ENCODE measurements at regions of chr3 and their contacts with region 1.

Region 1: DNA sequence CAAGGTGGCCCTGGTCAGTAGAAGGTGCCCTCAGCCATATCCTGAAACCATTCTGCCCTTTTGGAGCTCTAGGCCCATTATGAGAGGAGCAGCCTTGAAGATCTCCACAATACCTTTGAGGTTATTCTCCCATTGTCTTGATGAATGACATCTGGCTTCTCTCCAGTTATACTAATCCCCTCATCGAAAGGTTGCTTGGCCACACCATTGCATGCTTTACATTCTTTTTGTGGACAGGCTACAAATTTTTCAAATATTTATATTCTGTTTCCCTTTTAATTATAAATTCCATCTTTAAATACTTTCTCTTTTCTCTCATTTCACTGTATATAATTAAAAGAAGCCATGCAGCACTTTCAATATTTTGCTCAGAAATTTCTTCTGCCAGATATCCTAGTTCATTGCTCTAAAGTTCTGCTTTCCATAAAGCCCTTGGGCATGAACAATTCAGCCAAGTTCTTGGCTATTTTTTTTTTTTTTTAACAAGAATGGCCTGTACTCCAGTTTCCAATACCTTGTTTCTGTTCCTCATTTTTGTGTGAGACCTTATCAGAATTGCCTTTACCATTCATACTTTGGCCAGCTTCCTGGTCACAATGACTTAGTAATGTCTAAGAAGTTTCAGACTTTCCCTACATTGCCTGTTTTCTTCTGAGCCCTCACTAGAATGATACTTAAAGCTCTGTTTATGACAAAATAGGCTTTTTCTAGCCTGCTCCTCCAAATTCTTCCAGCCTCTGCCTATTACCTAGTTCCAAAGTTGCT is 138.9 kb upstream of the SGO1 start:
- DNase-seq: peak; percentile 36 to 78
- H3K4me3 ChIP-seq: no peak overlapping the region
- H3K27ac ChIP-seq: peak overlapping the region; percentile 78
- H3K4me1 ChIP-seq: no peaks in the 10 kb centered on the region; the same call in 1 of the 2 replicates
- H3K27me3 ChIP-seq: no peaks in the 10 kb centered on the region
- CTCF ChIP-seq: no peak

Region 2: DNA sequence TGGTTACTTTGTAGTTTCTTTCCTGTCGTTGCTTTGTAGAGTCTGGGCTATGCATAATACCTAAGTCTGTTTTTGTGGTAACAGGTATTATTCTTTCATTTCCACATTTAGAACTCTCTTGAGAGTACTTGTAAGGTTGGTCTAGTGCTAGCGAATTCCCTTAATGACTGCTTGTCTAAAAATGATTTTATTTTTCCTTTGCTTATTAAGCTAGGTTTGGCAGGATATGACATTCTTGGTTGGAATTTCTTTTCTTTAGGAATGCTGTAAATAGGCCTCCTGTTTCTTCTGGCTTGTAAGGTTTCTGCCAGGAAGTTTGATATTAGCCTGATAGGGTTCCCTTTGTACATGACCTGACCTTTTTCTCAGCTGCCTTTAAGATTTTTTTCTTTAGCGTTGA is 68.8 kb before region 1 on chr3:
- CTCF ChIA-PET with region 1: interaction called, 5 read pairs
- POLR2A ChIA-PET with region 1: interaction called, 6 read pairs
- intact Hi-C with region 1: loop called (anchors 1 kb)
- DNase-seq: no peak
- H3K4me3 ChIP-seq: no peak overlapping the region
- H3K27ac ChIP-seq: no peak overlapping the region
- H3K4me1 ChIP-seq: no peaks in the 10 kb centered on the region
- H3K27me3 ChIP-seq: no peaks in the 10 kb centered on the region
- CTCF ChIP-seq: no peak

Region 3: DNA sequence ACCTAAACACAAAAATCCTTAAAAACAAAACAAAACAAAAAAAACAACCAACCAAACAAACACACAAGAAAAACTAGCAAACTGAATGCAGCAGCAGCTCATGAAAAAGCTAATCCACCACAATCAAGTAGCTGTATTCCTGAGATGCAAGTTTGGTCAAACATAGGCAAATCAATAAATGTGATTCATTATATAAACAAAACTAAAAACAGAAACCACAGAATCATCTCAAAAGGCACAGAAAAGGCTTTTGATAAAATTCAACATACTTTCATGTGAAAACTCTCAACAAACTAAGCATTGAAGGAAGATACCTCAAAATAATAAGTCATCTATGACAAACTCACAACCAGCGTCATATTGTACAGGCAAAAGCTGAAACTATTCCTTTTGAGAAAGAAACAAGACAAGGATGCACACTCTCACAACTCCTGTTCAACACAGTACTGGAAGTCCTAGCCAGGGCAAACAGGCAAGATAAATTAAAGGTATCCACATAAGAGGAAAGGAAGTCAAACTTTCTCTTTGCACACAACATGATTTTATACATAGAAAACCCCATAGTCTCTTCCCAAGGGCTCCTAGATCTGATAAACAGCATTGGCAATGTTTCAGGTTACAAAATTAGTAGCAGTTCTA is 356.2 kb after region 1 on chr3:
- CTCF ChIA-PET with region 1: no interaction called
- POLR2A ChIA-PET with region 1: no interaction called
- intact Hi-C with region 1: loop called (anchors 1 kb)
- DNase-seq: no peak
- H3K4me3 ChIP-seq: no peak overlapping the region
- H3K27ac ChIP-seq: no peak overlapping the region
- H3K4me1 ChIP-seq: 0 out of 2 replicates have a peak, but pooled peaks cover 2% of the 10 kb centered on the region
- H3K27me3 ChIP-seq: no peaks in the 10 kb centered on the region
- CTCF ChIP-seq: no peak